ENCODE measurements at regions of chr4 and their contacts with region 1.

Region 1: GRCh38 chr4:185005216-185005819 is 13.0 kb upstream of the HELT start:
- DNase-seq: peak; percentile 69
- H3K4me3 Mint-ChIP-seq: peak overlapping the region; percentile 46
- H3K27ac Mint-ChIP-seq: no peak overlapping the region
- H3K4me1 Mint-ChIP-seq: peaks cover 9% of the 10 kb centered on the region
- H3K27me3 Mint-ChIP-seq: peaks cover 42% of the 10 kb centered on the region

Region 2: GRCh38 chr4:184653650-184654049 is 351.7 kb before region 1 on chr4:
- intact Hi-C with region 1: no loop called
- DNase-seq: no peak
- H3K4me3 Mint-ChIP-seq: no peak overlapping the region
- H3K27ac Mint-ChIP-seq: no peak overlapping the region
- H3K4me1 Mint-ChIP-seq: peaks cover 28% of the 10 kb centered on the region
- H3K27me3 Mint-ChIP-seq: no peaks in the 10 kb centered on the region

Region 3: DNA sequence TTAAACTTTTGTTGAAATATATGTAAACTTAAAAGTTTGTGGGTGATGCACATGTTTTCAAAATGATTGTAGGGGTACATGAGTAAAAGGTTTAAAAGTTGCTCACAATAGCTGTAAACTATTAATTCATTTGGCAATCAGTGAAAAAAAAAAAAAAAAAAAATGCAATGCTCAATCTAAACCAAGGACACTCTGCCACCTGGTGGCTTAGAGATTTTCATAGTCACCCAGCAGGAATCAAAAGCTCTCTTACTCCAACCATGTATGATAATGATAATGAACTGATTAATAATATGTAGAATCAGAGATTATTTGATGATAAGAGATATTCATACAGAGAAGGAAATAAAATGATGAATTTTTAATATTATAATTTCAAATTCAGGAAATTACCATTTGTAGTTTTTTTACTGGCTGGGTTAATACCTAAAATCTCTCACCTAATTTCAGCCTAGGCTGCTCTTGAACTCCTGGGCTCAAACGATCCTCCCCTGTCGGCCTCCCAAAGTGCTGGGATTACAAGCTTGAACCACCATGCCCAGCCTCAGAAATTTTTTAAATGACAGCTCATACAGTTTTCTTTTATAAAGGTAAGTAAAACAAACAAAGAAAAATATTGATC is 90.8 kb after region 1 on chr4:
- intact Hi-C with region 1: loop called (anchors 1 kb)
- DNase-seq: no peak
- H3K4me3 Mint-ChIP-seq: no peak overlapping the region
- H3K27ac Mint-ChIP-seq: no peak overlapping the region
- H3K4me1 Mint-ChIP-seq: no peaks in the 10 kb centered on the region
- H3K27me3 Mint-ChIP-seq: peaks cover 17% of the 10 kb centered on the region

Region 4: DNA sequence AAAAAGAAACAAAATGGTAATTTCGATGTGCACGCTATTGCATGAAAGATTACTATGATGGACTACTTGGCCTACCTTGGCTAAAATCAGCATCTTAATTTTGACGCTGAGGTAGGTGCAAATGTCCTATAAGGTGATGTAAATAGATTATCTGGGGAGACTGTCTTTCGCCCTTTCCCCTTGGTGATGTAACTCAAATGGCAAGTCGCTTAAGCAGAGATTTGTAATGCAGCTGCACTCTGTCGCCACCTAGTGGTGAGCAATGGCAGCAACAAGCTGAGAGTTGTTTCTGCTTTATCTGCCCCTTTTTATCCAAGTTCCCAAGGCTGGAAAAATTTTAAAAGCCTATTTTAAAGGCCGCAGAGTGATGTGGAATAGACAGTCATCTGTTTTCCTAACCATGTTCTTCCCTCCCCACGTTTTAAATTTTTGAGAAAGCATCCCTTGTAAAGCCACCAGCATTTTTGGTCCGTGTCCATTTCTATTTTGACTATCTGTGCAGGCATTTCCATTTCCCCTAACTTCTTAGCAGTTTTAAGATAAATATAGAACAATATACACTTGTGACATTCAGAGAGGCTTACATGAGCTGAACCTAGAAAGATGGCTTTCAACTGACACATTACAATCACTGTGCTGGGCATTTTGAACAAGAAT is 592.3 kb after region 1 on chr4:
- intact Hi-C with region 1: loop called (anchors 2 kb)
- DNase-seq: peak; percentile 32
- H3K4me3 Mint-ChIP-seq: no peak overlapping the region
- H3K27ac Mint-ChIP-seq: no peak overlapping the region
- H3K4me1 Mint-ChIP-seq: no peaks in the 10 kb centered on the region
- H3K27me3 Mint-ChIP-seq: peaks cover 13% of the 10 kb centered on the region

Region 5: DNA sequence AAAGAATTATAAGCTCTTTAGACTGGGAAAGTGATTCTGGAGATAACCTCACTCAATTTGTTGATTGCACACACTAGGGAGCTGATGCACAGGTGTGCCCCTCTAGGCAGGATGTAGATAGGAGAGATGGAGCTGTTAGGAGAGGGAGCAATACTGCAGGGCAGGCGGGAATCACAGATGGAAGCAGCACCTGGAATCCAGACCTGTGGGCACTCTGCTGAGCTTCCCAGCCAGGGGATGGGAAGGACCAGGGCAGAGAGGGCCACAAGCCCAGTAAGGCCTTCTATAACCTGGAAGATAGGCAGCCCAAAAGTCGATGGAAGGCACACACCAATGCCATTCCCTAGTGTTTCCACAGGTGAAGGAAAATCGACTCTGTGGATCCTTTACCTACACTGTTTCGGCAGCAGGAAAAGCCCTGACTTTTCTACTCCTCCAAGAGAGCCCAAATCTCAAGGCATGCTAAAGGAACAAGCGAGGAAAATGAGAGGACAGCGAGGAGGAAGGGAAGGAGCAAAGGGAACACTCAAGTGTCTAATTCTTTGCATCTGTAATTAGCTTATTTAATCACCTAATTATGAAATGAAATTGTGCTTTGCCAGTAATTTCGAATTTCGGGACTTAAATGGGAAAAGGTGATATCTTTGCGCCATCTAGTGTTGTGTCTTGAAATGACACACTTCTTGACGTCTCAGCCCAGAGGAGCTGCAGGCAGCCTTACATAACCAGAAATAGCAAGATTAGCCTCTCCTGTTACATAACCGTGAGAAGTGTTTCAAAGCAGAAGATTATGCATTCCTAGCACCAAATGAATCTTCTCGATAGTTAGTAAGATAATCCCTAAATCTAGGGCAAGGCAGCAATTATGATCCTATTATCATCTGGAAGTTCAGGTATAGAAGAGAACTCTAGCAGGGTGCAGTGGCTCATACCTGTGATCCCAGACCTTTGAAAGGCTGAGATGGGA is 1032.7 kb after region 1 on chr4:
- intact Hi-C with region 1: loop called (anchors 5 kb)
- DNase-seq: peak; percentile 5
- H3K4me3 Mint-ChIP-seq: no peak overlapping the region
- H3K27ac Mint-ChIP-seq: no peak overlapping the region
- H3K4me1 Mint-ChIP-seq: no peaks in the 10 kb centered on the region
- H3K27me3 Mint-ChIP-seq: peaks cover 11% of the 10 kb centered on the region